HepG2 (cell line): ENCODE measurements at regions of chr1 and their contacts with region 1.

Region 1: DNA sequence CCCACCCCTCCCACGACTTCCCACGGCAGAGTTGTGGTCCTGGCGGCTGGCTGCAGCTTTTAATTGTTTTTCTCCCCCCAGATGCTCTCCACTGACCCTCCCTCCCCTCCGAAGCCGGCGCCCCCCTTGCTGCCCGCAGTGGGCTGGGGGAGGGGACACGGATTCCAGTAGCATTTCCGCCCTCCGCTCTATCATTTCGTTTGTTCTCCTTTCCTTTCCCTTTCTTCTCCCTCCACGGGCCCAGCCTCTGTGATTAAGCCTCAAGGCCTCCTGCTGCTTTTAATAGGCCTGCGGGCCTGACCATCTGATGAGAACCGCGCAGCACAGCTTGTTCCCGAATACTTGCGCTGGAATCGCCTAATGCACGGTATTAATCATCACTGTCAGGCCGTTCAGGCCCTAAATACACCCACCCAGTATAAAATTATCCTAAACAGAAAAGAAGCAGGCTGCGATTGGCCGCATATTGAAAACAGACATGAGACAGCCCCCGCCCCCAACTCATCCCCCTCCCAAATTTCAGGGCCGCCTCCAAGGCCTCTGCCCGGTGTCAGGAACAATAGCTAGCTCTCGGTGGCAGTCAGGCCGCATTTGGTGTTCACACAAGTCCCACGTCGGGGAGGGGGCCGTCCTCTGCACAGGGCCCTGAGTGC is 102.0 kb upstream of the ARHGEF16 start:
- DNase-seq: no peak
- ATAC-seq: no peak
- H3K4me3 ChIP-seq: no peak overlapping the region
- H3K27ac ChIP-seq: no peak overlapping the region
- H3K4me1 ChIP-seq: peaks cover 92% of the 10 kb centered on the region
- H3K27me3 ChIP-seq: no peaks in the 10 kb centered on the region
- CTCF ChIP-seq: no peak
- EP300 ChIP-seq: no peak
- POLR2A ChIP-seq: no peak
- RAD21 ChIP-seq: no peak

Region 2: DNA sequence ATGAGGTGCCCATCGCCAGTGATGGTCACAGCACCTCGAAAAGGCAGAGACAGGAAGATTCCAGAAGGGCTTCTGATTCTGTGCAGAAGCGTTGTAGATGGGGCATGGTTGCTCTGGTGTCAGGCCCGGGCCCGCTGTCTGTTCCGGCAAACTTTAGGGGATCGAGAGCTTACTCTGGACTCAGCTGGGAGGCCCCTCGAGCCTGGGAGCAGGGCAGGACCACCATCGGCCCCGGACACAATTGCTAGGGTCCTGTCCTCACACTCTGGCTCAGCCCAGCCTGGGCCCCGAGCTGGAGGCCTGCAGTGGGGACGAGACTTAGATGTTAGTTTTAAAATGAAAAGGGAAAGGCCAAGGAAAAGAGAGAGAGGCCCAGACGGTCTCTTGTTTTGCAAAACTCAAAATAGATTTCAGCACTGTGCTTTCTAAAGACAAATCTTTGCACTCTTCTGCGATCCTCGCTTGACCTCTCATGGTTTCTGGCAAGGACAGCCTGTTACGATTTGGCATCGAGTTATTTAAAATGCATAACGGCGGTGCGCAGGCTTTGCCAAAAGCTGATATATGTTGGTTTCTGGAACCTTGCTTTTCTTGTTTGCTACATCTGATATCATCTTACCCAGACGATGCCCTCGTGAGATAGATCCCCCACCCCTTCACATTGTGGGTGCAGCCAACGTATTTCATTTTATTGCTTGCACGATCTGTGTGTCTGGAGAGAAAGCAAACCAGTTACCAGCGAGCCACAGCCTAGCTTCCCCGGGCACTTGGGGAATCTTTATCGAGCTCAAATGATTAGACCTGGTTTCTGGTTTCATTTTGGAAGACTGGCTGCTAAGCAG is 225.4 kb before region 1 on chr1:
- CTCF ChIA-PET with region 1: no interaction called
- POLR2A ChIA-PET with region 1: no interaction called
- in situ Hi-C with region 1: no loop called
- intact Hi-C with region 1: no loop called
- DNase-seq: no peak
- ATAC-seq: no peak
- H3K4me3 ChIP-seq: no peak overlapping the region
- H3K27ac ChIP-seq: no peak overlapping the region
- H3K4me1 ChIP-seq: peaks cover 38% of the 10 kb centered on the region
- H3K27me3 ChIP-seq: peaks cover 8 to 12% of the 10 kb centered on the region in 2 experiments; a peak in 1 of 5 replicates
- CTCF ChIP-seq: no peak
- EP300 ChIP-seq: no peak
- POLR2A ChIP-seq: no peak
- RAD21 ChIP-seq: no peak

Region 3: GRCh38 chr1:3292868-3293562 is 59.4 kb before region 1 on chr1:
- CTCF ChIA-PET with region 1: interaction called, 6 read pairs
- POLR2A ChIA-PET with region 1: interaction called, 5 read pairs
- in situ Hi-C with region 1: no loop called
- intact Hi-C with region 1: loop called (anchors 2 kb)
- DNase-seq: peak; percentile 92
- ATAC-seq: peak; percentile 75
- H3K4me3 ChIP-seq: peak overlapping the region; percentile 24 to 63 (median 37); a peak in 5 of 6 replicates
- H3K27ac ChIP-seq: peak overlapping the region; percentile 68
- H3K4me1 ChIP-seq: peaks cover 80% of the 10 kb centered on the region
- H3K27me3 ChIP-seq: no peaks in the 10 kb centered on the region
- CTCF ChIP-seq: no peak
- EP300 ChIP-seq: peak in 1 of 2 experiments; percentile 89; a peak in 2 of 4 replicates
- POLR2A ChIP-seq: peak in 1 of 2 experiments; percentile 10; a peak in 1 of 4 replicates
- RAD21 ChIP-seq: no peak

Region 4: GRCh38 chr1:3333903-3334302 is 18.5 kb before region 1 on chr1:
- CTCF ChIA-PET with region 1: no interaction called
- POLR2A ChIA-PET with region 1: interaction called, 78 read pairs
- in situ Hi-C with region 1: no loop called
- intact Hi-C with region 1: loop called (anchors 1 kb)
- DNase-seq: no peak
- ATAC-seq: no peak
- H3K4me3 ChIP-seq: peak overlapping the region in 2 of 3 experiments; percentile 6 to 62; a peak in 3 of 6 replicates
- H3K27ac ChIP-seq: peak overlapping the region; percentile 96
- H3K4me1 ChIP-seq: peaks cover 100% of the 10 kb centered on the region
- H3K27me3 ChIP-seq: no peaks in the 10 kb centered on the region
- CTCF ChIP-seq: no peak
- EP300 ChIP-seq: no peak
- POLR2A ChIP-seq: no peak
- RAD21 ChIP-seq: no peak

Region 5: GRCh38 chr1:3340548-3341235 is 11.7 kb before region 1 on chr1:
- CTCF ChIA-PET with region 1: no interaction called
- POLR2A ChIA-PET with region 1: interaction called, 78 read pairs
- in situ Hi-C with region 1: no loop called
- intact Hi-C with region 1: loop called (anchors 1 kb)
- DNase-seq: peak; percentile 79
- ATAC-seq: peak; percentile 71
- H3K4me3 ChIP-seq: peak overlapping the region in 1 of 3 experiments; percentile 41; a peak in 2 of 6 replicates
- H3K27ac ChIP-seq: peak overlapping the region; percentile 94
- H3K4me1 ChIP-seq: peaks cover 77% of the 10 kb centered on the region
- H3K27me3 ChIP-seq: no peaks in the 10 kb centered on the region
- CTCF ChIP-seq: peak; percentile 3; the same call in 1 of the 2 replicates
- EP300 ChIP-seq: peak in 1 of 2 experiments; percentile 85; a peak in 2 of 4 replicates
- POLR2A ChIP-seq: no peak
- RAD21 ChIP-seq: no peak

Region 6: DNA sequence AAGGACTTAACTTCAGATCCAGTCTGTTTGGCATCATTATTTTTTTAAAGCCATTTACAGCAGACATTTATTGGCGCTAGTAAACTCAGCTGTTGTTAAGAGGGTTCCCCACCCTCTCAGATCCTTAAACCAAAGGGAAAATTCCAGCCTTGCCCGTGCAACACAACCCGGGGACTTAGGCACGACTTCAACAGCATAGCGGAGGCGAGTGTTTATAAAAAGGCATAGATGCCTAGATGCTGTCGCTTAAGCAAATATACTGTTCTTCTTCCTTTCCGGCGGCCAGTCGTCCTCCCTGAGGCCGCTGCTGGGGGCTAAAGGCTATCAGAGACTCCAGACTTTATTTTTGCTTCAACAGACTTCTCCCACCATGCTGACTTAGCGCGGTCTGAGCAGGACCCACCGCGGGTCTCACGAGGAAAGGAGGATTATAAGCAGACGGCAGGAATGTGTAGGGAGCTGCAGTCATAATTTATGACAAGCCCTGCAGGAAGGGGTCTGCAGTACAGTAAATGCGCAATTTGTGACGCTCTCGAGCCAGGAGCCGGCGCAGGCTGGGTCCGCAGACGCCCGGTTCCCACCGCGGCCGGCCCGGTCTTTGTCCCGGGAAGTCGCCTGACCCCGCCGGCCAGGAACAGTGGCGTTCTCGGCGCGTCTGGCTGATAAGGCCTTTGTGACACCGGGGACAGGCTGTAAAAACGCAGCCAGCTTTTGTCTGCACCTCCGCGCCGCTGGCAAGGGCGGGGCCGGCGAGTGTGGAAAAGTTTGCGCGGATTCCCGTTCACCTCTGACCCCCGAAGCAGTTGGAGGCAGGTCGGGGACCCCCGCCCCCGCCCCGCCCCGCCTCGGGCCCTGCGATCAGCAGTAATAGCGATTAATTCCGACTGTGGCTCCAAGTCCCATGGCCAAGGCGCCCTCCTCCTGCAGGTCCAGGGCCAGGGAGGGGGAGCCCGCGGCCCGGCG is 40.9 kb after region 1 on chr1:
- CTCF ChIA-PET with region 1: no interaction called
- POLR2A ChIA-PET with region 1: no interaction called
- in situ Hi-C with region 1: no loop called
- intact Hi-C with region 1: no loop called
- DNase-seq: no peak
- ATAC-seq: peak; percentile 43
- H3K4me3 ChIP-seq: peak overlapping the region in 2 of 3 experiments; percentile 27 to 39; a peak in 4 of 6 replicates
- H3K27ac ChIP-seq: no peak overlapping the region
- H3K4me1 ChIP-seq: peaks cover 38% of the 10 kb centered on the region
- H3K27me3 ChIP-seq: peaks cover 6 to 18% of the 10 kb centered on the region in 2 experiments; a peak in 4 of 5 replicates
- CTCF ChIP-seq: no peak
- EP300 ChIP-seq: no peak
- POLR2A ChIP-seq: no peak
- RAD21 ChIP-seq: no peak